H1 (cell line): ENCODE measurements at regions of chr6 and their contacts with region 1.

Region 1: GRCh38 chr6:117776441-117776840 is 101.2 kb downstream of the NUS1 start:
- DNase-seq: no peak
- H3K4me3 ChIP-seq: no peak overlapping the region
- H3K27ac ChIP-seq: no peak overlapping the region
- H3K4me1 ChIP-seq: peaks cover 0 to 6% (median 0%) of the 10 kb centered on the region in 4 experiments; a peak in 2 of 7 replicates
- H3K27me3 ChIP-seq: no peaks in the 10 kb centered on the region
- CTCF ChIP-seq: peak in 2 of 3 experiments; percentile 34 to 67; a peak in 2 of 4 replicates
- EP300 ChIP-seq: no peak
- POLR2A ChIP-seq: no peak
- RAD21 ChIP-seq: peak; percentile 41 to 51

Region 2: GRCh38 chr6:117795248-117795647 is 18.8 kb after region 1 on chr6:
- CTCF ChIA-PET with region 1: interaction called, 72 read pairs
- POLR2A ChIA-PET with region 1: no interaction called
- DNase-seq: no peak
- H3K4me3 ChIP-seq: no peak overlapping the region
- H3K27ac ChIP-seq: no peak overlapping the region
- H3K4me1 ChIP-seq: peaks cover 0 to 12% (median 3%) of the 10 kb centered on the region in 4 experiments; a peak in 3 of 7 replicates
- H3K27me3 ChIP-seq: no peaks in the 10 kb centered on the region
- CTCF ChIP-seq: peak in 2 of 3 experiments; percentile 2 to 31; a peak in 2 of 4 replicates
- EP300 ChIP-seq: no peak
- POLR2A ChIP-seq: no peak
- RAD21 ChIP-seq: peak; percentile 21 to 37

Region 3: DNA sequence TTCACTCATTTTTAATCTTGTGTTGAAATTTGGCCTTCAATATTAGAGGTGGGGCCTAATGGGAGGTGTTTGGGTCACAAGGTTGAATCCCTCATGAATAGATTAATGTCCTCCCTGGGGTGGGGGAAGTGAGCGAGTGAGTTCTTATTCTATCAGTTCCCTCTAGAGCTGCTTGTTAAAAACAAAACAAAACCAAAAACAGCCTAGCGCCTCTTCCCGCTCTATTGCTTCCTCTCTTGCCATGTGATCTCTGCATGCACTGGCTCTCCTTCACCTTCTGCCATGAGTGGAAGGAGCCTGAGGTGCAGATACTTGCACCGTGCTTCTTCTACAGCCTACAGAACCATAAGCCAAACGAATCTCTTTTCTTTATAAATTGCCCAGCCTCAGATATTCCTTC is 41.1 kb after region 1 on chr6:
- CTCF ChIA-PET with region 1: interaction called, 14 read pairs
- POLR2A ChIA-PET with region 1: no interaction called
- DNase-seq: no peak
- H3K4me3 ChIP-seq: no peak overlapping the region
- H3K27ac ChIP-seq: no peak overlapping the region
- H3K4me1 ChIP-seq: no peaks in the 10 kb centered on the region
- H3K27me3 ChIP-seq: no peaks in the 10 kb centered on the region
- CTCF ChIP-seq: no peak
- EP300 ChIP-seq: no peak
- POLR2A ChIP-seq: no peak
- RAD21 ChIP-seq: no peak